Posterior vena cava (tissue), 2 donors: ENCODE measurements at regions of chr16 and their contacts with region 1.

Region 1: DNA sequence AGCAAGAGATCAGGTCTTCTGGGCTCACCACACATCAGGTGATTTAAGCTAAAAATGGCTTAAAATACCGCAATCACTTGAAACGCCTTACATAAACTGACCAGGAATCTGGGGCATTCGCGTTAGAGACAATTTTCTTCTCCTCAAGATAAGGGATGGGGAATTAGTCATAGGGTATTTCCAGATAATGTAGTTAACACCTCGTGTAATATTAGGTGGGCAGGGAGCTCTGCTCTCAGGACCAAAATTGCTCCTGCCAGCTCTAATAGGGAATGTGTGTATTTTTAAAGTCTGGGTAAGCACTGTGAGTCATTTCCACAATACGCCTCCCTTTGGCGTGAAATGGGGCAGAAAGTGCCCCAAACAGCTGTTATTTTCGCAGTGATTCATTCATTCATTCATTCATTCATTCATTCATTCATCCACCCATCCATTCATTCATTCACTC is 408.6 kb downstream of the MAF start:
- DNase-seq: no peak

Region 2: DNA sequence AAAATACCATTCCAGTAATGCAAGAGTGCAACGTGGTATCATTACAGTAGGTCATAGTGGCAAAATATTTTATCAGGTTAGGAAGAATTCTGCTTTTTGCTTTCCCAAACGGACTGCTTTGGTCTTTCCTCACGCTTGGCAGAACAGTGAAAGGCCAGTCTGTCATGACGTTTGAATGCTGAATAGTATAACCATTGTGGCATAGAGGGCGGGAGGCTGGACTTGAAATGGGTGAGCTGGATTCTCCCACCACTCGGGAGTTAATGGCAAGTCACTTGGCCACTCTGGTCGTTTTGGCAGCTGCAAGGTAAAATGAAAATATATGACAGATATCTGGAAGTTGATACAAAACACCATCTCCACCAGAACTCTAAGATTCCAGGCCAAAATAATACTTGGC is 17.4 kb after region 1 on chr16:
- intact Hi-C with region 1: loop called in 1 of 2 experiments (anchors 1 kb)
- DNase-seq: no peak

Region 3: GRCh38 chr16:79510879-79511278 is 318.9 kb after region 1 on chr16:
- intact Hi-C with region 1: loop called in 1 of 2 experiments (anchors 2 kb)
- DNase-seq: no peak

Region 4: DNA sequence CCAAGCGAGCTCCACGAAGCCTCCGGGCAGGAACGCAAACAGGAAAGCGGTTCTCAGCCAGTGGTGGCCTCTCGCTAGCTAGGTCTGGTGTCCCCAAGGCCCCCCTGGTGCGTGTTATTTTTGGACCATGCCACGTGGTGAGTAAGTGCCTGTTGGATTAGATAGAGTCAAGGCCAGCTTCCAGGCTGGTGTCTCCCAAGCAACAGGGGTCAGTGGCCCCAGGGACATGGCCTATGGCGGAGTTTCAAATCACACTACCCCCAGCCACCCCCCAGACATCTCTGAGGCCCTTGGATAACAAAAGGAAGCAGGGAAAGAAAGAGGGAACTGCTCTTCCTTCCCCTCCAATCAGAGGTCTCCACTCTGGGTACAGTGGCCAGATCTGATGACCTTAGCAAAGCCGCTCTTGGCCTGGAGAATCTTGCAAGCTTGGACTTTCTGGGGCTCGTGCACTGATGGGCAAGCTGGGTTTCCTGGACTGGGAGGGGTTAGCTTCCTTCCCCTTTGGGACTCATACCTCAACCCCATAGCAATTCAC is 350.4 kb after region 1 on chr16:
- intact Hi-C with region 1: no loop called
- DNase-seq: no peak